H1 (cell line): ENCODE measurements at regions of chr6 and their contacts with region 1.

Region 1: DNA sequence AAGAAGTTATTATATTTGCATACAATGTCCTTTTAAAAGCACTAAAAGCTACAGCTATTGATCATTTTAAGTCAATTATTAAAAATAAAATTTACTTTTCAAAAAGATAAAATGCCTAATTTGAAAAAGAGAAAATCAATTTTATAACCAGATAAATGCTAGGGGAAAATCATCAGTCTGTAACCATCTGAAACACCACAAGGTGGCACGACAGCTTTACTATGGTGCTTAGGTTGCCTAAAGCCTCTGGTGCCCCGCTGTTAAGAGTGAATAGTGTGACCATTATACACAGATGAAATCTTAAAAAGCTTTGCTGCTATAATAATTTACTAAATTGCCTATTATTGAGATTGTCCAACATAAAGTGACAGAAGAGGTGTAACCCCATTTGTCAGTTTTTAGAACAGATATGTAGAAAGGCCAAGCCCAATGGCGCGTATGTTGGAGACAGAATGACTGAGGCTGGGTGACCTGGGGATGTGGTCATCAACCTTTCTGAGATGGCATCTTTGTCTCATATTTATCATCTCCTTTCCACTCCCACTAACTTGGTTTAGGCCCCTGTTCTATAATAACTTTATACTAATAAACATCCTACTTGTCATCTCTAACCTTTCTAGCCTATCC is 100.8 kb downstream of the MOXD1 start:
- DNase-seq: no peak
- H3K4me3 ChIP-seq: no peak overlapping the region
- H3K27ac ChIP-seq: no peak overlapping the region
- H3K4me1 ChIP-seq: no peaks in the 10 kb centered on the region
- H3K27me3 ChIP-seq: no peaks in the 10 kb centered on the region
- CTCF ChIP-seq: peak in 2 of 3 experiments; percentile 61 to 81; a peak in 3 of 4 replicates
- EP300 ChIP-seq: no peak
- POLR2A ChIP-seq: no peak
- RAD21 ChIP-seq: peak; percentile 90 to 93

Region 2: GRCh38 chr6:131581523-131581922 is 718.9 kb before region 1 on chr6:
- CTCF ChIA-PET with region 1: no interaction called
- POLR2A ChIA-PET with region 1: no interaction called
- DNase-seq: no peak
- H3K4me3 ChIP-seq: no peak overlapping the region
- H3K27ac ChIP-seq: no peak overlapping the region
- H3K4me1 ChIP-seq: peaks cover 0 to 3% (median 0%) of the 10 kb centered on the region in 4 experiments; a peak in 1 of 7 replicates
- H3K27me3 ChIP-seq: no peaks in the 10 kb centered on the region
- CTCF ChIP-seq: no peak
- EP300 ChIP-seq: no peak
- POLR2A ChIP-seq: no peak
- RAD21 ChIP-seq: no peak

Region 3: DNA sequence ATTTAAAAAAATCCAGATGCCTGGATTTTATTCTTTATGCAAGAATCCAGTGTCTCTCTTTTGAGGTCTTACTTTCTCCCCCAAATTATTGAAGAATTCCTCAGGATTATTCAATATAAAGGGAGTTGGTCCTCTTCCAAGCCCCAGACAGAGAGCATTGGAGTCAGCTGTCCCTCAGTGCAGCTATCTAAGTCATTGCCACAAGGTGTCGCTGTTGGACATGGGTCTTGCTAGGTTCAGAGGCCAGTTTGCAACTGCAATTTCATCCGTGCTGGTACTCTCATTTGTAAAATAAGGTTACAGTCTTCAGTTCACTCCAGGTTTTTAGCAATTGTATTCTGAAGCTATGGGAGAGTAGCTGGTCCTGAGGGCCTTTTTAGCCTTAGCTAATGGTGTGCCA is 377.1 kb before region 1 on chr6:
- CTCF ChIA-PET with region 1: interaction called, 13 read pairs
- POLR2A ChIA-PET with region 1: no interaction called
- DNase-seq: peak in 1 of 2 experiments; percentile 81
- H3K4me3 ChIP-seq: no peak overlapping the region
- H3K27ac ChIP-seq: no peak overlapping the region
- H3K4me1 ChIP-seq: no peaks in the 10 kb centered on the region
- H3K27me3 ChIP-seq: no peaks in the 10 kb centered on the region
- CTCF ChIP-seq: peak; percentile 83 to 95 (median 88)
- EP300 ChIP-seq: no peak
- POLR2A ChIP-seq: no peak
- RAD21 ChIP-seq: peak; percentile 84 to 89

Region 4: DNA sequence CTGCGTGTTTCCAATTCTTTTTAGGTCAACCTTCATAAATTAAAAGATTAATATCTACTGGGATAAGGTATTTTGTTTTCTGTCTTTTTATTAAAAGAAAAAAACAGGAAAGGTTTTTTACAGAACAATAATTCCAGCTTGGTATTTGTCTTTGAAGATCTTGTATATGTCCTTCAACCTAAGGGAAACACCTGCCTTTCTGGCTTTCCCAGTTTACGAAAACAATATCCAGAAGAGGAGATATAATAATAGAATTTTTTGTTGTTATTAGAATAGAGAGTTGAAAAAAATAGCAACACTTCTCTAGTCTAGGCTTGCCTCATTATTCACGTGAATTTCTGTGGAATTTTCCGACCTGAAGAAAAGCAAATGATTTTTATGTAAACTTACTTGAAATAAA is 311.4 kb before region 1 on chr6:
- CTCF ChIA-PET with region 1: no interaction called
- POLR2A ChIA-PET with region 1: no interaction called
- DNase-seq: no peak
- H3K4me3 ChIP-seq: no peak overlapping the region
- H3K27ac ChIP-seq: no peak overlapping the region
- H3K4me1 ChIP-seq: no peaks in the 10 kb centered on the region
- H3K27me3 ChIP-seq: no peaks in the 10 kb centered on the region
- CTCF ChIP-seq: no peak
- EP300 ChIP-seq: no peak
- POLR2A ChIP-seq: no peak
- RAD21 ChIP-seq: no peak

Region 5: GRCh38 chr6:132011582-132011981 is 288.9 kb before region 1 on chr6:
- CTCF ChIA-PET with region 1: no interaction called
- POLR2A ChIA-PET with region 1: no interaction called
- DNase-seq: no peak
- H3K4me3 ChIP-seq: no peak overlapping the region
- H3K27ac ChIP-seq: no peak overlapping the region
- H3K4me1 ChIP-seq: no peaks in the 10 kb centered on the region
- H3K27me3 ChIP-seq: peaks cover 0 to 1% (median 0%) of the 10 kb centered on the region in 4 experiments; a peak in 1 of 7 replicates
- CTCF ChIP-seq: no peak
- EP300 ChIP-seq: no peak
- POLR2A ChIP-seq: no peak
- RAD21 ChIP-seq: no peak

Region 6: DNA sequence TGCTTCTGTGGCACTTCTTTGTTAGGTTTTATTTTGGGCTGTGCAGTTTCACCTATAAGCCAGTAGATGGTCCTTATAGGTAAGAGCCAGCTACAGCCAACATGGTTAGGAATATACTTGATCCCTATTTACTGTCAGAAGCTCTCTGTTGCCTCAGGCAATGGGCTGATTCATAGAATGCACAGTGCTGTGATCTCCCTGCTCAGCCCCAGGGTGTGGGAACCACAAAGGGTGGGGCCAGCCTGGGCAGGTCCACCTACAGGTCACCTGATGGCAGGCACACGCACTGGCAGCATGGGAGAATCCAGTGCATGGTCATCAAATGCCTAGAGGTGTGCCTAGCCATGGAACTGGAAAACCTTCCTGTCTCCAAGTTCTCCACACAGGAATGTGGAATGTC is 91.1 kb before region 1 on chr6:
- CTCF ChIA-PET with region 1: no interaction called
- POLR2A ChIA-PET with region 1: no interaction called
- DNase-seq: no peak
- H3K4me3 ChIP-seq: no peak overlapping the region
- H3K27ac ChIP-seq: no peak overlapping the region
- H3K4me1 ChIP-seq: no peaks in the 10 kb centered on the region
- H3K27me3 ChIP-seq: no peaks in the 10 kb centered on the region
- CTCF ChIP-seq: no peak
- EP300 ChIP-seq: no peak
- POLR2A ChIP-seq: no peak
- RAD21 ChIP-seq: no peak

Region 7: DNA sequence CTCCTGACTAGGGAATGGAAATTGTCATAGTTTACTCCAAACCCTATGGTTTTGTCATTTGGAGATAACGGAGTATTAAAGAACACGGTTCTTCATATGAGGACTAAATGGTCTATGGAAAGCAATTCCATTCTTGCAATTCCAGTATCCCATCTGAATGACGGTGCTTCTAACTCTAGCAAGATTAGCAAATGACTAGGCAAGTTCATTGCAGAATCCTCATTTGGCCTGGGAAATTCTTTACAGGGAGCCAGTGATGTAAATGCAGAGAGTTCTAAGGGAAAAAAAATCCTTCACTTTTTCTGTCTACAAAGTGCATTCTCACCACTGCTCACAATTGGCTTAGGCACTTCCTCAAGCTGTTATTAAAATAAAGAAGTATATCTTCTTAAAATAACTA is 10.7 kb before region 1 on chr6:
- CTCF ChIA-PET with region 1: interaction called, 30 read pairs
- POLR2A ChIA-PET with region 1: no interaction called
- DNase-seq: no peak
- H3K4me3 ChIP-seq: no peak overlapping the region
- H3K27ac ChIP-seq: no peak overlapping the region
- H3K4me1 ChIP-seq: no peaks in the 10 kb centered on the region
- H3K27me3 ChIP-seq: no peaks in the 10 kb centered on the region
- CTCF ChIP-seq: no peak
- EP300 ChIP-seq: no peak
- POLR2A ChIP-seq: no peak
- RAD21 ChIP-seq: no peak

Region 8: GRCh38 chr6:132465530-132466485 is 165.4 kb after region 1 on chr6:
- CTCF ChIA-PET with region 1: interaction called, 10 read pairs
- POLR2A ChIA-PET with region 1: no interaction called
- DNase-seq: no peak
- H3K4me3 ChIP-seq: no peak overlapping the region
- H3K27ac ChIP-seq: no peak overlapping the region
- H3K4me1 ChIP-seq: no peaks in the 10 kb centered on the region
- H3K27me3 ChIP-seq: no peaks in the 10 kb centered on the region
- CTCF ChIP-seq: no peak
- EP300 ChIP-seq: no peak
- POLR2A ChIP-seq: no peak
- RAD21 ChIP-seq: no peak